HCT116 (cell line): ENCODE measurements at regions of chr3 and their contacts with region 1.

Region 1: GRCh38 chr3:30693470-30694120 is 87.2 kb downstream of the TGFBR2 start:
- DNase-seq: peak; percentile 40
- ATAC-seq: peak; percentile 70
- H3K4me3 ChIP-seq: no peak overlapping the region
- H3K27ac ChIP-seq: no peak overlapping the region; the same call in 1 of the 2 replicates
- H3K4me1 ChIP-seq: peaks cover 19 to 31% of the 10 kb centered on the region in 2 experiments
- H3K27me3 ChIP-seq: no peaks in the 10 kb centered on the region
- CTCF ChIP-seq: peak; percentile 62 to 85 (median 67); a peak in 5 of 6 replicates
- POLR2A ChIP-seq: no peak
- RAD21 ChIP-seq: peak; percentile 97

Region 2: GRCh38 chr3:30042274-30042859 is 651.2 kb before region 1 on chr3:
- CTCF ChIA-PET with region 1: interaction called, 5 read pairs
- POLR2A ChIA-PET with region 1: no interaction called
- RAD21 ChIA-PET with region 1: interaction called, 3 to 4 read pairs
- intact Hi-C with region 1: loop called (anchors 1 kb)
- DNase-seq: peak; percentile 76
- ATAC-seq: peak; percentile 84
- H3K4me3 ChIP-seq: no peak overlapping the region
- H3K27ac ChIP-seq: no peak overlapping the region
- H3K4me1 ChIP-seq: no peaks in the 10 kb centered on the region
- H3K27me3 ChIP-seq: no peaks in the 10 kb centered on the region
- CTCF ChIP-seq: peak; percentile 60 to 83 (median 79)
- POLR2A ChIP-seq: no peak
- RAD21 ChIP-seq: peak; percentile 93

Region 3: DNA sequence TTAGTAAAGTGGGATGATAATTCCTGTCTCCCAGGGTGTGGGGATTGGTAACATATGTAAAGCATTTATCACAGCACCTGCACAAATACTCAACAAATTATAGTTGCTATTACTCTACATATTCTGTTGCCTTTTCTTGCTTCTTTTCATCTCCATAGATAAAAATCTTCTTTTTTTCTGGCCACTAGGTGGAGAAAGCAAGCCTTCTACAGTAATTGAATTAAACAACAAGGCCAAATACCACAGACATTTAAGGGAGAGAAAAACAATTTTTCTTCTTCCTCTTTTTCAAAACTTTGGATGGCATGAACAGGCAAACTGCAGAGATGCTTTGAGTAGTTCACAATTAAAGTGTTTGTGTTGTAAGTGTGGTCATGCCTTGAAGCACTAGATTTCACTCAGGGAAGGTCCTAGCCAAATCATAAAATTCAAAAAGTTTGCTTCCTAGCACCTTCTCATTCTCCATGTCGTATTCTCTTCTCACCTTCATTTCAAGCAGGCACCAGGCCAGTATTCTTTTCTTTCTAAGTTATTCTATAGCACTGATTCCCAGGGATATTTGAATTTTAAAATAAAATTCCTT is 580.6 kb before region 1 on chr3:
- CTCF ChIA-PET with region 1: interaction called, 8 read pairs
- POLR2A ChIA-PET with region 1: no interaction called
- RAD21 ChIA-PET with region 1: no interaction called
- intact Hi-C with region 1: loop called (anchors 1 kb)
- DNase-seq: peak; percentile 23
- ATAC-seq: peak; percentile 66
- H3K4me3 ChIP-seq: no peak overlapping the region
- H3K27ac ChIP-seq: no peak overlapping the region
- H3K4me1 ChIP-seq: no peaks in the 10 kb centered on the region; a peak in 1 of 4 replicates
- H3K27me3 ChIP-seq: no peaks in the 10 kb centered on the region
- CTCF ChIP-seq: peak; percentile 55 to 72 (median 68); a peak in 5 of 6 replicates
- POLR2A ChIP-seq: no peak
- RAD21 ChIP-seq: peak; percentile 79

Region 4: GRCh38 chr3:30319713-30320112 is 373.9 kb before region 1 on chr3:
- CTCF ChIA-PET with region 1: interaction called, 9 read pairs
- POLR2A ChIA-PET with region 1: no interaction called
- RAD21 ChIA-PET with region 1: interaction called in 1 of 2 experiments, 5 read pairs
- intact Hi-C with region 1: loop called (anchors 1 kb)
- DNase-seq: peak; percentile 73
- ATAC-seq: peak; percentile 97
- H3K4me3 ChIP-seq: no peak overlapping the region
- H3K27ac ChIP-seq: no peak overlapping the region
- H3K4me1 ChIP-seq: peaks cover 5 to 16% of the 10 kb centered on the region in 2 experiments; a peak in 3 of 4 replicates
- H3K27me3 ChIP-seq: no peaks in the 10 kb centered on the region
- CTCF ChIP-seq: peak; percentile 40 to 67 (median 55); a peak in 5 of 6 replicates
- POLR2A ChIP-seq: no peak
- RAD21 ChIP-seq: peak; percentile 79